ENCODE measurements at regions of chr6 and their contacts with region 1.

Region 1: GRCh38 chr6:52664186-52664990 is 6.5 kb upstream of the TMEM14A start:
- DNase-seq: peak; percentile 92
- ATAC-seq: peak; percentile 98

Region 2: DNA sequence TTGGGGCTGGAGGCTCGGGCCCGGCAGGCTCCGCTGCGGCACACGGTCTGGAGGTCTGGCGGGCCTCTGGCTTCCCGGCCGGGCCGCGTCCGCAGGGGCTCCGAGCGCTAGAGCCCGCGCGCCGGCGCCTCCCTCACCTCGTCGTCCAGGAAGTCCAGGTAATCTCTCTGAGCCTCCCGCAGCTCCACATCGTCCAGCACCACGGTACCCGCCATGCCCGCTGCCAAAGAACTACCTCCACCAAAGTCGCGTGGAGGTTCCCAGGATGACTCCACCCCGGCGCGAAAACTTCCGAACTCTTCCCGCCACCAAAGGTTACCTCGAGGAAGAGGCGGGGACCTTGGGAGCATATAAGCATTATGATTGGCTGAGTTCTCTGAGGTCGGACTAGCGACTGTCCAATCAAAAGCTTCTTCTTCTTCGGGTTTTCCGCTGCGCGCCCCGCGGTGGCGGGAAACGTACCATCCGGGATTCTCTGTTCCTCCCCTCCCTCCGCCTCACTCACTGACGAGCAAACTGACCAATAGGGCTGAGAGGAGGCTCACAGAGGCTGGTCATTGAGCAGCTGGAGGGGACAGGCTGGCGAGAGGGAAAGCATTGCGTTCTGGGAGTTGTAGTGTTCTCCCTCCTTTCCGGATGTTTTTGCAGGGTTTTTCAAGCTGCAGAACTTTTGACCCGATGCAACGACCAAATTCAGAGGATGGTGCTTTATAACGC is 379.8 kb before region 1 on chr6 and contains the start of gene MCM3:
- intact Hi-C with region 1: loop called (anchors 5 kb)
- DNase-seq: peak; percentile 97
- ATAC-seq: peak; percentile 100
- total RNA-seq, gene MCM3: 21.7 TPM

Region 3: DNA sequence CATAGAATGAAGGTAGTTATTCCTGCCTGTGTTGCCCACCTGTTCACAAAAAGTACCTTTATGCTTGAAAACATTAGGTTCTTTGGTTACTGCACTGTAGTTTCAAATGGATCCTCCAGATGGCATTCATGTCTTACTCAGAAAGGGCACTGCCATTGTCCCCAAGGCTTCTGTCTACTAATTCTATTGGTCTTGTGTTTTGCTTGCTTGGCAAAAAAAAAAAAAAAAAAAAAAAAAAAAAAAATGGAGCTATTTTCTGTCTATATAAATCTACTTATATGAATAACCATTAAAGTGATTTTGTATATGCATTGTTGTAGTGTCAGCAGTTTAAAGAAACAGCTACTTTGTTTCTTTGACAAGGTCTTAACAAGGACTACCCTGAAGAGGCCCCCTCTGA is 256.9 kb before region 1 on chr6:
- intact Hi-C with region 1: loop called (anchors 2 kb)
- DNase-seq: no peak
- ATAC-seq: peak; percentile 43

Region 4: GRCh38 chr6:52419809-52420670 is 244.3 kb before region 1 on chr6 and contains the start of gene EFHC1:
- intact Hi-C with region 1: loop called (anchors 1 kb)
- DNase-seq: peak; percentile 99
- ATAC-seq: peak; percentile 98
- total RNA-seq, gene EFHC1: 4.8 TPM

Region 5: GRCh38 chr6:52497652-52498408 is 166.6 kb before region 1 on chr6:
- intact Hi-C with region 1: loop called (anchors 10 kb)
- DNase-seq: no peak
- ATAC-seq: no peak

Region 6: DNA sequence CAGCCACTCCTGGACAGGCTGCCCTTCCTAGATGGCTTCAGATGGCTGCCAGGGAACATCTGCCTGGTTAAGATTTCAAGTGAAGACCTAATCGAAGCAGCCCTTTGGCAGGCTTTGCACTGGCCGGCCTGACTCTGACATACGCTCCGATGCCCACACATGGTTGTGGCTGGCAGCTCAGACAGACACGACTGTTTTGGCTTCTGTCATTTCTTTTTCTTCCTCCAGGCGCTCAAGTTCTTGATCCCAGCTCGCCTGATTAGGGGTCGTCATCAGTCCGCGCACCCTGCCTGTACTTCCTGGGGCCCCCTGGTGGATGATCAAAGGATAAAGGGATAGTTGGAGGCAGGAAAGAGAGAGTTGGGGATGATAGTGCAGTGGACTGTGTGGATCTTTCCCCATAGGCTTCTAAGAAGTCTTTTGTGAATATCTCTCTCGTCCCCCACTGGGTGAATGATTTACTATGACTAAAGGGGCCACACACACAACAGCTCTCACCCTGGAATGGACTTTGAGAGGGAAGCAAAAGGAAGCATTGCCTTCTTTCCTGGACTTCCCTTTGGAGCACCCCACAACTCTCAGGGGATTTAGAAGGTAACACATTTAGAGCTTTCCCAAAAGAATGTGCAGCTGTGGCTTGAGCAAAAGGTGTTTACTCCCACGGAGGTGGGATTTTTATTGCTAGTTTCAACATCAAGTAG is 66.1 kb before region 1 on chr6:
- intact Hi-C with region 1: loop called (anchors 5 kb)
- DNase-seq: peak; percentile 79
- ATAC-seq: peak; percentile 70

Region 7: DNA sequence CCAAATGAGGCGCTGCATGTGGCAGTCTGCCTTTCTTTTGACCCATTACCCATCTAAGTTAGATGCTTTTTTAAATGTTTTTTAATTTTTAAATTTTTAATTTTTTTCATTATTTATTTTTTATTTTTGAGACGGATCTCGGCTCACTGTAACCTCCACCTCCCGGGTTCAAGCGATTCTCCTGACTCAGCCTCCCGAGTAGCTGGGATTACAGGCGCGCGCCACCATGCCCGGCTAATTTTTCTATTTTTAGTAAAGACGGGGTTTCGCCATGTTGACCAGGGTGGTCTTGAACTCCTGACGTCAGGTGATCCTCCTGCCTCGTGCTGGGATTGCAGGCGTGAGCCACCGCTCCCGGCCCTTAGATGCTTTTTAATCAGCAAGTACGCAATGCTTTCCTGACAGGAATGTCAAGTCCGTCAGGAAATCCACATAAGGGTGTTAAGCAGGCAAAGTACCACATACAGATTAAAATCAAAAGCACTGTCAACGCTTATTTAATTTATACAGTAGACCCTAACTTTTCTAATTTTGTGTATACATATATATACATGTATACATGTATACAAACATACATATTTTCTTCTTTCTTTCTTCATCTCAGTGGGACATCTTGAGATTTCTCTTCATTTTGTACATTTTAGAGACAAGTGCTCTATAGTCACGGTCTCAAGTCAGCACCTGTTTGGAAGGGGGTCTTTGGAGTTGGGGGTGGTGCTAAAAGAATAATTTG is 331.7 kb after region 1 on chr6:
- intact Hi-C with region 1: loop called (anchors 10 kb)
- DNase-seq: no peak
- ATAC-seq: no peak